SK-N-SH (cell line): ENCODE measurements at regions of chr18 and their contacts with region 1.

Region 1: GRCh38 chr18:59459369-59460079 is 100.5 kb upstream of the LMAN1 start:
- DNase-seq: peak; percentile 45
- H3K4me3 ChIP-seq: no peak overlapping the region
- H3K27ac ChIP-seq: peak overlapping the region; percentile 14 to 67; a peak in 3 of 4 replicates
- H3K4me1 ChIP-seq: peaks cover 10 to 31% of the 10 kb centered on the region in 2 experiments; a peak in 3 of 4 replicates
- H3K27me3 ChIP-seq: no peaks in the 10 kb centered on the region
- CTCF ChIP-seq: peak; percentile 75
- EP300 ChIP-seq: 0 out of 4 replicates have a peak, but pooled peaks of 1 of the 2 experiments have one; percentile 16
- RAD21 ChIP-seq: peak; percentile 94

Region 2: DNA sequence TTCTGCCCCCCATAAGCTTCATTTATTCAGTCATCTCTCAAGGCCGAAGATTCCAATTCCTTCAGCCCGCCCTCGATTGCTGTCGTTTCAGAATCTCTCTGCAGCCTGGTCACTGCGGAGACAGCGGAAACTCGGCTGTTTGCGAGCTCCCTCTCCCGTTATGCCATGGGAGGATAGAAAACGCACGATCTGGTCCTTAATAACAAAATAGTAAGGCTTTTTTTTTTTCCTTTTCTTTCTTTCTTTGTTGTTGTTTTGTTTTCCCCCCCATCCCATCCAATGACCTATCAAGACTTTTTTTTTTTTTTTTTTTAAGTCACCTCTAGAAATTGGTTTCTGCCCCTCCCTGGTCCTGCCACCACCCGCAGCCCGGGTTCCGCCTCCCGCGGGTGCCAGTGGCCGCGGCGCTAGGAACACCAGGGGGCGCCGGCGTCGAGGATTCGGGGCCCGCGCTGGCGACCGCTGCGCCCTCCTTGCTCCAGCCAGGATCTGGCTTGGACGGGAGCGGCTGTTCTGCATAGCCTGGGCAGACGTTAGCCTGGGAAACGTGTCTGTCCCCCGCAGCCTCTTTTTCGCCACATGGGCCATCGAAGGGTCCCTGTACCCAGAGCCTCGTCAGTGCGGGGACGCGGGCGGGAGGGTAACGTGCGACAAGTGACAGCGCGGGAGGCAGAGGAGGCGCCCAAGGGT is 151.1 kb before region 1 on chr18:
- CTCF ChIA-PET with region 1: interaction called, 12 read pairs
- POLR2A ChIA-PET with region 1: interaction called, 4 read pairs
- DNase-seq: peak; percentile 92
- H3K4me3 ChIP-seq: peak overlapping the region; percentile 36 to 65
- H3K27ac ChIP-seq: no peak overlapping the region
- H3K4me1 ChIP-seq: peaks cover 0 to 3% of the 10 kb centered on the region in 2 experiments; a peak in 1 of 4 replicates
- H3K27me3 ChIP-seq: peaks cover 31% of the 10 kb centered on the region; the same call in 1 of the 2 replicates
- CTCF ChIP-seq: peak; percentile 95
- EP300 ChIP-seq: no peak
- RAD21 ChIP-seq: peak; percentile 71

Region 3: GRCh38 chr18:59423259-59423658 is 36.3 kb before region 1 on chr18:
- CTCF ChIA-PET with region 1: no interaction called
- POLR2A ChIA-PET with region 1: no interaction called
- DNase-seq: no peak
- H3K4me3 ChIP-seq: no peak overlapping the region
- H3K27ac ChIP-seq: no peak overlapping the region
- H3K4me1 ChIP-seq: peaks cover 0 to 11% of the 10 kb centered on the region in 2 experiments; a peak in 2 of 4 replicates
- H3K27me3 ChIP-seq: no peaks in the 10 kb centered on the region
- CTCF ChIP-seq: no peak
- EP300 ChIP-seq: no peak
- RAD21 ChIP-seq: no peak

Region 4: GRCh38 chr18:59478591-59478990 is 19.1 kb after region 1 on chr18:
- CTCF ChIA-PET with region 1: interaction called, 11 read pairs
- POLR2A ChIA-PET with region 1: no interaction called
- DNase-seq: peak; percentile 50
- H3K4me3 ChIP-seq: no peak overlapping the region
- H3K27ac ChIP-seq: peak overlapping the region in 1 of 2 experiments; percentile 98; a peak in 3 of 4 replicates
- H3K4me1 ChIP-seq: peaks cover 0 to 22% of the 10 kb centered on the region in 2 experiments; a peak in 3 of 4 replicates
- H3K27me3 ChIP-seq: no peaks in the 10 kb centered on the region
- CTCF ChIP-seq: no peak
- EP300 ChIP-seq: peak in 1 of 2 experiments; percentile 90; a peak in 2 of 4 replicates
- RAD21 ChIP-seq: 0 out of 2 replicates have a peak, but pooled peaks have one; percentile 22

Region 5: DNA sequence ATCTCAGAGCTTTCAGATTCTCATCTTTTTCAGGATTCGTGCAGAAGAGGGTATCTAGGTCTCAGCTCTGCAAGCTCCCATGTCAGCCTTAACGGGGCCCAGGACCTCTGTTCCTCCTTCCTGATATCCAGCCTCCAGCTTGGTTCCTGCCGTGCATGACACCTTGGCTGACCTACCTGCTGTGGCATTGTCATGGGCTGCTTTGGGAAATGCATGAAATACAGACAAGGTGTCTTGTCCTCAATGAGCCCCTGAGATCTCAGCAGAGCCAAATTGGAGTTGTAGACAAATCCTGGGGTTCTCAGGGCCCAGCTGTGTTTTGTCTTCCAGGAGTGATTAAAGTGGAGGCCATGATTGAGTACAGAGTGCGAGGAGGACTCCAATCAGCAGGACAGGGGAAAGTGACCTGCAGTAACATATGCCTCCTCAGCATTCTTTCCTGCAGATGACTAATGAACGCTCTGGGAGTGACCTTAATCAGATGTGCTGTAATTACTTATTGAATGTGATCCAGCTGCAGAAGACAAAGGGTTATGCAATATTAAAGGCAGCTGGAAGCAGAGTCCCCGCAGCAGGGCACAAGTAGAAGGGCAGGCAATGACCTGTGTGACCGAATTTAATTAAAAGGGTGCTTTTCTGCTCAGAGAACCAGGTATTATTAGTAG is 96.6 kb after region 1 on chr18:
- CTCF ChIA-PET with region 1: interaction called, 14 read pairs
- POLR2A ChIA-PET with region 1: no interaction called
- DNase-seq: peak; percentile 52
- H3K4me3 ChIP-seq: no peak overlapping the region
- H3K27ac ChIP-seq: peak overlapping the region in 1 of 2 experiments; percentile 55; a peak in 2 of 4 replicates
- H3K4me1 ChIP-seq: peaks cover 0 to 33% of the 10 kb centered on the region in 2 experiments; a peak in 2 of 4 replicates
- H3K27me3 ChIP-seq: no peaks in the 10 kb centered on the region
- CTCF ChIP-seq: no peak
- EP300 ChIP-seq: peak in 1 of 2 experiments; percentile 92; a peak in 2 of 4 replicates
- RAD21 ChIP-seq: peak; percentile 25; the same call in 1 of the 2 replicates

Region 6: DNA sequence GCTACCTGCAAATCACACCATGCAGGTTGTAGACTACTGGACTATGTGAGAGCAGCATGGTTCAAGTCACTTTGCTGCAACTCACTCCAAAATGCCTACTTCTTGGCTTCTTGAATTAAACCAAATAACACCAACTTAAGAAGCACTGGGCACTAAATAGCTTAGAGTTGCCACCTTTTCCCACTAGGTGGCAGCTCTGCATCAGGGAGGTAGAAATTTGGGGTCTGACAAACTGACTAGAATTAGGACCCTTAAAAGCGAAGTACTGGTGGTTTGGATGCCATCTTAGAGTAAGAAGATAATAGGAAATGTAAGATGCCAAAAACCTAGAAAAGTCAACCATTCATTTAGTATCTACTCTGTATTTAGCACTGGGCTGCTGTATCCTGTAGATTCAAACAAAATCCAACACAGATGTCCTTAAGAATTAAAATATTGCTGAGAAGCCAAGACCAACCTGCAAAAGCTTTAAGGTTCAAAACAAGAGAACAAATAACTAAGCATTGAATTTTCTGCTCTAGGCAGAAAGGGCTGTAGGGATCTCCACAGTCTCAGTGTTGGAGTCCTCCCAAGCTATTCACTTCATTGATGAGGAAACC is 172.2 kb after region 1 on chr18:
- CTCF ChIA-PET with region 1: interaction called, 33 read pairs
- POLR2A ChIA-PET with region 1: no interaction called
- DNase-seq: peak; percentile 35
- H3K4me3 ChIP-seq: no peak overlapping the region
- H3K27ac ChIP-seq: no peak overlapping the region
- H3K4me1 ChIP-seq: peaks cover 0 to 4% of the 10 kb centered on the region in 2 experiments; a peak in 2 of 4 replicates
- H3K27me3 ChIP-seq: no peaks in the 10 kb centered on the region
- CTCF ChIP-seq: peak; percentile 90
- EP300 ChIP-seq: no peak
- RAD21 ChIP-seq: peak; percentile 83

Region 7: DNA sequence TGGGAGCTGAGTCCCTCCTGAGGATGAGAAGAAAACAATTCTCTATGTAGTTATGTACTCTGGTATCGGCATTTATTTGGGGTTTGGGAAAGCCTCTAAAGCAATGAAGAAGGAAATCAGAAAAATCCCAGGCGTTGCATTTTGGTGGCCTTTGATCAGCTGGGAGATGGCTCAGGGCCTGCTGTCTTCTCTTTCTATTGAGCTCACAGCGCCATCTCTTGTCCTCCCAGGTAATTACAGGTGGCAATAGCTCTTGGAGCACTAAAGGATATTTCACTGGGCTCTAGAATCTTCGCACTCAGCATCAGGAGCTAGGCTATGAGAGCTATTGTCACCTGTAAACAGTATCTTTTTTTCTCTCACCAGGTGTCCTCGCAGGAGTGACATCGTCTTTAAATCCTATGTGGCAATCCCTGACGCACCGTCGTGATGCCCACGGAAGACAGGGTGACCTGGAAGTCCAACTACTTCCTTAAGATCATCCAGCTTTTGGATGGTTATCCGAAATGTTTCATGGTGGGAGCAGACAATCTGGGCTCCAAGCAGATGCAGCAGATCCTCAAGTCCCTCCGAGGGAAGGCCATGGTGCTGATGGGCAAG is 364.2 kb after region 1 on chr18:
- CTCF ChIA-PET with region 1: interaction called, 276 read pairs
- POLR2A ChIA-PET with region 1: interaction called, 4 read pairs
- DNase-seq: peak; percentile 64
- H3K4me3 ChIP-seq: no peak overlapping the region; a peak in 1 of 4 replicates
- H3K27ac ChIP-seq: peak overlapping the region in 1 of 2 experiments; percentile 54; a peak in 2 of 4 replicates
- H3K4me1 ChIP-seq: peaks cover 0 to 12% of the 10 kb centered on the region in 2 experiments; a peak in 1 of 4 replicates
- H3K27me3 ChIP-seq: no peaks in the 10 kb centered on the region
- CTCF ChIP-seq: peak; percentile 94
- EP300 ChIP-seq: no peak
- RAD21 ChIP-seq: peak; percentile 99